ENCODE measurements at regions of chr17 and their contacts with region 1.

Region 1: DNA sequence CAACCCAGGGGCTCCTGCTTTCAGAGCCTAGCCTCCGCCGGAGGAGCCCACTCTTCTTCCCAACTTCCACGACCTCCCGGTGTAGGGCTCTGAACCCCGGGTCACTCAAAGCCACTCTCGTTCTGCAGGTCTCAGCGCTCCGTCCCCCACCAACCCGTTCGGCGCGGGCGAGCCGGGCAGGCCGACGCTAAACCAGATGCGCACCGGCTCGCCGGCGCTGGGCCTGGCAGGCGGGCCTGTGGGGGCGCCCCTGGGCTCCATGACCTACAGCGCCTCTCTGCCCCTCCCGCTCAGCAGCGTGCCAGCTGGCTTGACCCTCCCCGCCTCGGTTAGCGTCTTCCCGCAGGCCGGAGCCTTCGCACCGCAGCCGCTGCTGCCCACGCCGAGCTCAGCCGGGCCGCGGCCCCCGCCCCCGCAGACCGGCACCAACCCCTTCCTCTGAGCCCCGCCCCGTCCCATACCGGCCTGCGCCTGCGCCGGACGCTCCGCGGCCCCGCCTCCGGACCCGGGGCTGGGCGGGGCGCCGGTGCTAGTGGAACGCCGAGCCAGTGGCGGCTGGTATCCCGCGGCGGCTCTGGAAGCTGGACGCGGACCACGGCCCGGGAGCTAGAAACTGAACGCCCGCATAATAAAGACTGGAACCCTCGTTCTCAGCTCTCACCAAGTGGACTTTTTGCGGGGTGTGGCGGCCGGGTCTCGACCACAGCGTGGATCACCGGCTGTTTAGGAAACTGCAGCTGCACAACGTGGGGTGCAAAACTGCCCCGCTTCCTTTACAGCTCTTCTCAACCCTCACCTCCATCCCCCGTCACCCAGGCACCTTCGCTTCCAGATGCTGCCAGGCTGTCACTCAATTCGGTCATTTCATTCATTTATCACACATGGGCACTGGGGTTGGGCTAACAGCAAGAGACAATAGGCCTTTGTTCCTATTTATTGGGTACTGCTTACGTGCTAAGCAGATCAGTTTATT is 5.0 kb upstream of the SPATA20 start:
- DNase-seq: peak; percentile 80 to 96
- ATAC-seq: peak; percentile 71 to 85
- H3K4me3 ChIP-seq: peak overlapping the region; percentile 51
- H3K27ac ChIP-seq: peak overlapping the region; percentile 85 to 90
- H3K4me1 ChIP-seq: peaks cover 45% of the 10 kb centered on the region
- CTCF ChIP-seq: peak; percentile 28; the same call in 1 of the 3 replicates
- EP300 ChIP-seq: no peak
- POLR2A ChIP-seq: peak; percentile 92
- RAD21 ChIP-seq: peak in 1 of 2 experiments; percentile 22; a peak in 1 of 5 replicates

Region 2: DNA sequence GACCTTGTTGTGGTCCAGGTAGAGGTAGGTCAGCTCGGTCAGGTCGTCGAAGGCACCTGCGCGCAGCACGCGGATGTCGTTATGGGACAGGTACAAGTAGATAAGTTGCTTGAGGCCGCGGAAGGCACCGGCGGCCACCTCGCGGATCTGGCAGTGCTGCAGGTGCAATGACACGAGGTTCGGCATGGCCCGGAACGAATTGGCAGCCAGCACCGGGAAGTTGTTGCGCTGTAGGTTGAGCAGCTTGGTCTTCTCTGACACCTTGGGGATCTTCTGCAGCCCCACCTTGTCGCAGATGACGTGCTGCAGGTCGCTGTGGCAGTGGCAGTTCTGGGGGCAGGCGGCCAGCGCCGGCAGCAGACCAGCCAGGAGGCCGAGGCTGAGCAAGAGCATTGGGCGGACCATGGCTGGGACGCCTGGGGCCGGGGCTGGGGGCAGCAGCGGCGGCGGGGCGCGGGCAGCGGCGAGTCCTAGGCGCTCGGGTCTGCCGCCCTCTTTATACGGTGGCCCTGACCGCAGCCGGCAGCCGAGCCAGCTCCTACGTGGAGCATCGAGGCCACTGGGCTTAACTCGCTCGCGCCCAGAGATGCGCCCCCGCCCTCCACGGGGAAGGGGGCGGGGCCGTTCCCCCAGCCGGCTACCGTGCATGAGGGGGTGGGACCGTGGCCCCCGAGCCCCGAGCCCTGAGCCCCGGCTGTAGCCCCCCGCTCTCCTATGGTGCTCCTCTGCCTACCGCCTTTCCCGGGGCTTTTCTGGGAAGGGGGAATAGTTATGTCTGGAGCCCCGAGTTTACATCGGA is 73.4 kb before region 1 on chr17 and contains the start of gene CHAD:
- CTCF ChIA-PET with region 1: interaction called, 11 read pairs
- POLR2A ChIA-PET with region 1: no interaction called
- DNase-seq: no peak
- ATAC-seq: no peak
- H3K4me3 ChIP-seq: no peak within 1 kb of the TSS
- H3K27ac ChIP-seq: no peak within 1 kb of the TSS
- H3K4me1 ChIP-seq: peaks cover 16% of the 10 kb centered on the region
- CTCF ChIP-seq: no peak
- EP300 ChIP-seq: no peak
- POLR2A ChIP-seq: no peak
- RAD21 ChIP-seq: no peak
- polyA plus RNA-seq, gene CHAD: not detected in 2 replicates

Region 3: DNA sequence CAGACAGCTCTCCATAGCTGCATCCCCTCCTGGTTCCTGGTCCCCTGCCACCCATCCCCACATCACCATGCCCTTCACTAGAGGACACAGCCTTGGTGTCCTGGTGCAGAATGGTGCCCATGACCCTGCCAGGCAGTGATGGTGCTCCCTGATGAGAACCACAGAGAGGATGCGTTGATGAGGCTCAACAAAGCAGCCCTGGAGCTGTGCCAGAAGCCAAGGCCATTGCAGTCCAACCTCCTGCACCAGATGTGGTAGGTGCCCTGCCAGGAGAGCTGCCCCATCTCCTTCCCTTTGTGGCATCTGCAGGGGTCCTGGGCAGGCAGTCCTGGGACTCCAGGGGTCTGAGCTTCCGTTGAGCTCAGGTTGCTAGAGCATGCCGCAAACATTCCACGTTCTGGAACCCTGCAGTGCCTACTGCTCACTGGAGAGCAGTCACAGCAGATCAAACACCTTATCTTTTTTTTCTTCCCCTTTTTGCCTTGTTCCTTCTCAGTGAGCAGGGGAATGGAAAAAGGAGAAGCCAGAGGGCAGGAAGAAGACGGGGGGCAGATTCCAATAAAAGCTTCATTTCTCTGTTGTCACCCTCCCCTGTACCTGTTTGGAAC is 14.7 kb before region 1 on chr17:
- CTCF ChIA-PET with region 1: interaction called, 14 read pairs
- POLR2A ChIA-PET with region 1: interaction called, 3 read pairs
- DNase-seq: no peak
- ATAC-seq: no peak
- H3K4me3 ChIP-seq: no peak overlapping the region
- H3K27ac ChIP-seq: no peak overlapping the region
- H3K4me1 ChIP-seq: peaks cover 2% of the 10 kb centered on the region; the same call in 2 of the 3 replicates
- CTCF ChIP-seq: no peak
- EP300 ChIP-seq: no peak
- POLR2A ChIP-seq: no peak
- RAD21 ChIP-seq: no peak

Region 4: GRCh38 chr17:51391982-51392654 is 850.1 kb after region 1 on chr17:
- CTCF ChIA-PET with region 1: no interaction called
- POLR2A ChIA-PET with region 1: no interaction called
- DNase-seq: peak in 1 of 2 experiments; percentile 28
- ATAC-seq: peak; percentile 40 to 60; a peak in 3 of 6 replicates
- H3K4me3 ChIP-seq: no peak overlapping the region
- H3K27ac ChIP-seq: peak overlapping the region; percentile 15 to 19; a peak in 3 of 6 replicates
- H3K4me1 ChIP-seq: peaks cover 18% of the 10 kb centered on the region
- CTCF ChIP-seq: no peak
- EP300 ChIP-seq: no peak
- POLR2A ChIP-seq: no peak
- RAD21 ChIP-seq: no peak